ENCODE measurements at regions of chr6 and their contacts with region 1.

Region 1: GRCh38 chr6:11700118-11700718 is 78.4 kb downstream of the ADTRP start:
- DNase-seq: no peak
- H3K4me3 ChIP-seq: no peak overlapping the region
- H3K27ac ChIP-seq: no peak overlapping the region
- H3K4me1 ChIP-seq: peaks cover 0 to 9% (median 0%) of the 10 kb centered on the region in 4 donors
- H3K27me3 ChIP-seq: no peaks in the 10 kb centered on the region
- CTCF ChIP-seq: peak; percentile 49 to 53

Region 2: GRCh38 chr6:11473008-11473740 is 227.0 kb before region 1 on chr6:
- intact Hi-C with region 1: no loop called
- DNase-seq: no peak
- H3K4me3 ChIP-seq: peak overlapping the region; percentile 1 to 25
- H3K27ac ChIP-seq: no peak overlapping the region
- H3K4me1 ChIP-seq: peaks cover 0 to 12% (median 4%) of the 10 kb centered on the region in 4 donors
- H3K27me3 ChIP-seq: no peaks in the 10 kb centered on the region
- CTCF ChIP-seq: no peak

Region 3: DNA sequence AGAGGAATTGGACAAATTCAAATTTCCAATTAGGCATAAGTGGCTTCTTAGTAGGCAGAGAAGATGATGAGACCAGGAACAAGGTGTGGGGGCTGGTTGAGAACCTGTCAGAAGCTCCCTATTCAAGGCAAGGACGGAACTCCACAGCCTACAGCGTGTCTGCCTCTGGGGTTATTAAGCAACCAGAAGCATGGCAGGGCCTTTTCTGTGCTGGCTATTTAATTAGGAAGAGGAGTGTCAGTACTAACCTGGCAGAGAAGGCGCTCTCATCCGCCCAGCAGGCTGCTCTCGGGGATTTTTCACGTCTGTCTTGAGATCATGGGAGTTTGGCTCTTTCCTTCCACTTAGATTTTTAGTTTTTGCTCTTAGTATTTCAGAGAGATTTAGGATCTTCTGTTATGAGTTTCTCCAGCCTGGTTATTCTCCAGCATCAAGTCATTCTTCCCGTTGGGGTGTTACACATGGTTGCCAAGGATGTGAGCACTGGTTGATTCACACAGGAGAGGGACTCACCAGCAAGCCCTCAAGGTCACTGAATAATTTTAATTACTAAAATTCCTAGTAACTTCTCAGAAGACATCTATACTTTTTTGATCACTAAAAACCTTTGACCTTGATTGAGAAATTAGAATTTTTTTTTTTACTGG is 54.5 kb after region 1 on chr6:
- intact Hi-C with region 1: no loop called
- DNase-seq: peak in 1 of 2 donors; percentile 56
- H3K4me3 ChIP-seq: no peak overlapping the region
- H3K27ac ChIP-seq: peak overlapping the region in 1 of 2 donors; percentile 36
- H3K4me1 ChIP-seq: no peaks in the 10 kb centered on the region
- H3K27me3 ChIP-seq: no peaks in the 10 kb centered on the region
- CTCF ChIP-seq: no peak

Region 4: GRCh38 chr6:12011276-12012076 is 311.3 kb after region 1 on chr6:
- intact Hi-C with region 1: loop called (anchors 10 kb)
- DNase-seq: peak; percentile 97 to 99
- H3K4me3 ChIP-seq: peak overlapping the region; percentile 88 to 91
- H3K27ac ChIP-seq: peak overlapping the region; percentile 92 to 94
- H3K4me1 ChIP-seq: peaks cover 0 to 29% (median 14%) of the 10 kb centered on the region in 4 donors
- H3K27me3 ChIP-seq: no peaks in the 10 kb centered on the region
- CTCF ChIP-seq: no peak

Measured in tibial artery (tissue), 4 donors.